Panc1 (cell line): ENCODE measurements at regions of chr18 and their contacts with region 1.

Region 1: DNA sequence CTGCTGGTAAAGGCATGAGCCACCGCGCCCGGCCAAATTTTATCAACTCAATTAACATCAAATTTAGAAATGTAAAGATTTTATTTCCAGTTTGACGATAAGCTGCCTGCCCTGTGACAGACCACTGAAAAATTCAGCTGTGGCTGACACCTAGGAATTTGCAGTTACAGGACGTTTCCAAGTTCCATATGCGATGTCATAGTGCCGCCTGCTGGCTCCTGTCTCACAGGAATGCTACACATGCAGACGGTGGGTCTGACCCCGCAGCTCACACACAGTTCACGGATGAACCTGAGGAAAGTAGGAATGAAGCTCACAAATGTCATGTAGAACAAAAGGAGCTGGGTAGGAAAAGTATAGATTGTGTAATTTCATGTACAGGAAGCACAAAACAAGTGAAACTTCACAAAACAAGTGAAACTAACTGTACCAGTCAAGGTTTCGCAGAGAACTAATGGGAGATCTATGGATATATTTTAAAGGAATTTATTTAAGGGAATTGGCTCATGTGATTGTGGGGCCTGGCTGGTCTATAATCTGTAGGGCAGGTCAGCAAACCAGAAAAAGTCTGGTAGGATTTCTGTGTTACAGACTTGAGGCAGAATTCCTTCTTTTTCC is 13.2 kb upstream of the SEH1L start:
- DNase-seq: peak; percentile 69
- ATAC-seq: peak; percentile 99
- H3K4me3 ChIP-seq: 0 out of 4 replicates have a peak overlapping the region, but pooled peaks of 1 of the 2 experiments have one; percentile 1
- H3K27ac ChIP-seq: no peak overlapping the region
- H3K4me1 ChIP-seq: no peaks in the 10 kb centered on the region
- H3K27me3 ChIP-seq: no peaks in the 10 kb centered on the region
- CTCF ChIP-seq: peak; percentile 93

Region 2: DNA sequence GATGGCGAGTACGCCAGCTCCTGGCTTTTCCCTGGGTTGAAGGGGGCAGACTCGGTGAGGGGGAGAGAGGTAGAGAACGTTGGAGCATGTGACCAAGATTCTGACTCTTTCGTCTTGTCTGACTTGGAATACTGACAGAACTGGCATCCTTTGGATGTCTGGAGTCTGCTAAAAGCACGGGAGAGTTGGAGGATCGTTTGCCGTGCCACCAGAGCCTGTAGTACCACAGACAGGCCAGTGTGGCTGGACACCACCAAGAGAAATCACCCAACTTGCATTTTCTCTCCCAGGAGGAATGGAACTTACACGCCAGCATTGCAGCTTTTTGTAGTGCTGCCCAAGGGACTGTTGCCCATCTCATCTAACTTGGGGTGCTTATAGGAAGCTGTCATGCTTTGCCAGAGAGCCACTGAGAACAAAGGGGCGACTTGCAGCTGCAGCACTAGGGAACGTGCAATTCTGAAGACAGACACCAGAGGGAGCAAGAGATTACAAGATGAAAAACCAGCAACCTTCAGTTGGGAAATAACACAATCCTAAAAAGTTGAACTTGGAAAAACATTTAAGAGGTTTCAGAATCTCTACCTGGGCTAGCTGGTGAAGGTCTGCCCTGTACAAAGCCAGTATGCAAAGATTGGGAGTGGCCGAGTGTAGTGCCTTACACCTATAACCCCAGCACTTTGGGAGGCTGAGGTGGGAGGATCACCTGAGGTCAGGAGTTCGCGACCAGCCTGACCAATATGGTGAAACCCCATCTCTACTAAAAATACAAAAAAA is 207.6 kb before region 1 on chr18:
- CTCF ChIA-PET with region 1: interaction called, 9 read pairs
- POLR2A ChIA-PET with region 1: no interaction called
- in situ Hi-C with region 1: no loop called
- intact Hi-C with region 1: loop called (anchors 2 kb)
- DNase-seq: peak; percentile 76
- ATAC-seq: peak; percentile 89
- H3K4me3 ChIP-seq: no peak overlapping the region
- H3K27ac ChIP-seq: no peak overlapping the region
- H3K4me1 ChIP-seq: peaks cover 4% of the 10 kb centered on the region; the same call in 1 of the 2 replicates
- H3K27me3 ChIP-seq: no peaks in the 10 kb centered on the region
- CTCF ChIP-seq: peak; percentile 88

Region 3: GRCh38 chr18:12744103-12744502 is 190.5 kb before region 1 on chr18:
- CTCF ChIA-PET with region 1: interaction called, 7 read pairs
- POLR2A ChIA-PET with region 1: no interaction called
- in situ Hi-C with region 1: no loop called
- intact Hi-C with region 1: loop called (anchors 1 kb)
- DNase-seq: peak; percentile 51
- ATAC-seq: peak; percentile 80
- H3K4me3 ChIP-seq: no peak overlapping the region
- H3K27ac ChIP-seq: no peak overlapping the region
- H3K4me1 ChIP-seq: peaks cover 5% of the 10 kb centered on the region; the same call in 1 of the 2 replicates
- H3K27me3 ChIP-seq: no peaks in the 10 kb centered on the region
- CTCF ChIP-seq: no peak; the same call in 1 of the 2 replicates